Prostate gland (tissue), 2 donors: ENCODE measurements at regions of chr4 and their contacts with region 1.

Region 1: GRCh38 chr4:6716018-6716911 is at the start of gene BLOC1S4:
- DNase-seq: peak; percentile 80
- H3K4me3 ChIP-seq: peak within 1 kb of the TSS; percentile 78 to 92
- H3K27ac ChIP-seq: peak within 1 kb of the TSS; percentile 91 to 94
- H3K4me1 ChIP-seq: no peaks in the 10 kb centered on the region
- H3K27me3 ChIP-seq: no peaks in the 10 kb centered on the region
- CTCF ChIP-seq: peak in 2 of 4 experiments; percentile 37 to 47
- POLR2A ChIP-seq: peak; percentile 79
- total RNA-seq, gene BLOC1S4: 20.4 to 35.2 TPM

Region 2: GRCh38 chr4:6873792-6874461 is 157.7 kb after region 1 on chr4:
- intact Hi-C with region 1: loop called (anchors 1 kb)
- DNase-seq: peak; percentile 69
- H3K4me3 ChIP-seq: no peak overlapping the region
- H3K27ac ChIP-seq: no peak overlapping the region
- H3K4me1 ChIP-seq: no peaks in the 10 kb centered on the region
- H3K27me3 ChIP-seq: no peaks in the 10 kb centered on the region
- CTCF ChIP-seq: peak; percentile 72 to 89 (median 86)
- POLR2A ChIP-seq: no peak

Region 3: GRCh38 chr4:6885951-6886557 is 169.8 kb after region 1 on chr4:
- intact Hi-C with region 1: loop called (anchors 5 kb)
- DNase-seq: no peak
- H3K4me3 ChIP-seq: no peak overlapping the region
- H3K27ac ChIP-seq: peak overlapping the region; percentile 21 to 44
- H3K4me1 ChIP-seq: no peaks in the 10 kb centered on the region
- H3K27me3 ChIP-seq: no peaks in the 10 kb centered on the region
- CTCF ChIP-seq: peak in 2 of 4 experiments; percentile 18 to 29
- POLR2A ChIP-seq: no peak